Activated CD8-positive, alpha-beta memory T cell treated with anti-CD3 and anti-CD28 coated beads, Interleukin-2, amount 10 ng/mL, durations not matched to agents 7 days and 5 days (primary cell): ENCODE measurements at regions of chr3 and their contacts with region 1.

Region 1: GRCh38 chr3:129052675-129053074 is 7.9 kb upstream of the GP9 start:
- DNase-seq: no peak
- ATAC-seq: no peak
- H3K4me3 Mint-ChIP-seq: no peak overlapping the region
- H3K27ac Mint-ChIP-seq: no peak overlapping the region
- H3K4me1 Mint-ChIP-seq: peaks cover 6% of the 10 kb centered on the region
- H3K27me3 Mint-ChIP-seq: peaks cover 15% of the 10 kb centered on the region

Region 2: GRCh38 chr3:129026728-129027543 is 25.7 kb before region 1 on chr3:
- CTCF ChIA-PET with region 1: interaction called, 22 read pairs
- DNase-seq: peak; percentile 97
- ATAC-seq: peak; percentile 100
- H3K4me3 Mint-ChIP-seq: peak overlapping the region; percentile 80
- H3K27ac Mint-ChIP-seq: peak overlapping the region; percentile 96
- H3K4me1 Mint-ChIP-seq: peaks cover 24% of the 10 kb centered on the region
- H3K27me3 Mint-ChIP-seq: peaks cover 6% of the 10 kb centered on the region

Region 3: GRCh38 chr3:129120254-129121004 is 67.8 kb after region 1 on chr3:
- CTCF ChIA-PET with region 1: interaction called, 45 read pairs
- DNase-seq: peak; percentile 98
- ATAC-seq: peak; percentile 69
- H3K4me3 Mint-ChIP-seq: peak overlapping the region; percentile 88
- H3K27ac Mint-ChIP-seq: peak overlapping the region; percentile 97
- H3K4me1 Mint-ChIP-seq: peaks cover 61% of the 10 kb centered on the region
- H3K27me3 Mint-ChIP-seq: no peaks in the 10 kb centered on the region

Region 4: GRCh38 chr3:129160891-129161859 is 108.5 kb after region 1 on chr3 and contains the start of gene ISY1:
- CTCF ChIA-PET with region 1: interaction called, 22 read pairs
- DNase-seq: peak; percentile 93
- ATAC-seq: peak; percentile 84
- H3K4me3 Mint-ChIP-seq: peak within 1 kb of the TSS; percentile 92
- H3K27ac Mint-ChIP-seq: peak within 1 kb of the TSS; percentile 97
- H3K4me1 Mint-ChIP-seq: peaks cover 31% of the 10 kb centered on the region
- H3K27me3 Mint-ChIP-seq: no peaks in the 10 kb centered on the region
- total RNA-seq, gene ISY1: 44.4 to 75.9 TPM

Region 5: GRCh38 chr3:129249276-129250065 is 196.8 kb after region 1 on chr3 and contains the start of gene COPG1:
- CTCF ChIA-PET with region 1: interaction called, 95 read pairs
- DNase-seq: peak; percentile 91
- ATAC-seq: peak; percentile 91
- H3K4me3 Mint-ChIP-seq: peak within 1 kb of the TSS; percentile 94
- H3K27ac Mint-ChIP-seq: peak within 1 kb of the TSS; percentile 94
- H3K4me1 Mint-ChIP-seq: peaks cover 48% of the 10 kb centered on the region
- H3K27me3 Mint-ChIP-seq: no peaks in the 10 kb centered on the region
- total RNA-seq, gene COPG1: 130 to 141 TPM